ENCODE measurements at regions of chr9 and their contacts with region 1.

Region 1: DNA sequence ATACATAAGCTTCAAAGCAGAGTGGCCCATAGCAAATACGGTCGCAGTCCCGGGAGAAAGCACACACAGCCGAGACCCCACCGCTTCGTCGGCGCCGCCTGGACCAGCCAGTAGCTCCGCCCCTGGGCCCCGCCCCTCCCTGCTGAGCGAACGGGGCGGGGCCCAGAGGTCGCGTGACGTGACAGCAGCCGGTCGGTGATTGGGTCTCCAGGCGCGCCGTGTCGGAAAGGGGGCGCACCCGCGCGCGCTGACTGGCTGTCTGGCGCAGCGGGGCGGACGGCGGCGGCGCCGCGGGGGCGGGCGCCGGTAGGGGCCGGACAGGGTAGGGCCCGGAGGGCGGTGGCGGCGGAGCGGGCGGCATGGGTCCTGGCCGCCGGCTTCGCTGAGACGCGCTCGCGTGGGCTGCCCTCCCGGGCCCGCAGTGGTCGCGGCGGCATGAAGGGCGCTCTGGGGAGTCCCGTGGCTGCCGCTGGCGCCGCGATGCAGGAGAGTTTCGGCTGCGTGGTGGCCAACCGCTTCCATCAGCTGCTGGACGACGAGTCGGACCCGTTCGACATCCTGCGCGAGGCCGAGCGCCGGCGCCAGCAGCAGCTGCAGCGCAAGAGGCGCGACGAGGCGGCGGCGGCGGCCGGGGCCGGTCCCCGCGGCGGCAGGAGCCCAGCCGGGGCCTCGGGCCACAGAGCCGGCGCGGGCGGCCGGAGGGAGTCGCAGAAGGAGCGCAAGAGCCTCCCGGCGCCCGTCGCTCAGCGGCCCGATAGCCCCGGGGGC is at the start of gene HABP4:
- DNase-seq: peak; percentile 92 to 100 (median 96)

Region 2: DNA sequence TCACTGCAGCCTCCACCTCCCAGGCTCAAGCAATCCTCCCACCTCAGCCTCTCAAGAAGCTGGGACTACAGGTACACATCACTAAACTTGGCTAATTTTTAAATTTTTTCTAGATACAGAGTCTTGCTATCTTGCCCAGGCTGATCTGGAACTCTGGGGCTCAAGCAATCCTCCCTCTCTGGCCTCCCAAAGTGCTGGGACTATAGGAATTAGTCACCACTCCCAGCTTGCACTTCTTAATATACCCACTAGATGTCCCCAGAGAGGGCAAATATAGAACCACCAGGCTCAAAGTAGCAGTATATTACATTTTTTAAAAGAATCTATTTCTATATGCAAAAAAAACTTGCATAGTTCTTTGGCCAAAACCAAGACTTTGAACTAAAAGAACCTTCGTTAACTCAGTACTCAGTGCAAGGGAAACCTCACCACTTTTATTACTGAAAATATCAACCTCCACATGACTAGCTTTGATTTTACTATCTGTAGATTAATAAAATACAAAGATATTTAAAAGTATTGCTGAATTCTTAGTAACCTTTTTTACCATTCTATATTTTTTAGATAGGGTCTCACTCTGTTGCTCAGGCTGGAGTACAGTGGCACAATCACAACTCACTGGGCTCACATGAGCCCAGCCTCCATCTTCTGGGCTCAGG is 122.2 kb before region 1 on chr9:
- intact Hi-C with region 1: loop called (anchors 10 kb)
- DNase-seq: peak in 2 of 10 donors; percentile 25 to 45

Region 3: DNA sequence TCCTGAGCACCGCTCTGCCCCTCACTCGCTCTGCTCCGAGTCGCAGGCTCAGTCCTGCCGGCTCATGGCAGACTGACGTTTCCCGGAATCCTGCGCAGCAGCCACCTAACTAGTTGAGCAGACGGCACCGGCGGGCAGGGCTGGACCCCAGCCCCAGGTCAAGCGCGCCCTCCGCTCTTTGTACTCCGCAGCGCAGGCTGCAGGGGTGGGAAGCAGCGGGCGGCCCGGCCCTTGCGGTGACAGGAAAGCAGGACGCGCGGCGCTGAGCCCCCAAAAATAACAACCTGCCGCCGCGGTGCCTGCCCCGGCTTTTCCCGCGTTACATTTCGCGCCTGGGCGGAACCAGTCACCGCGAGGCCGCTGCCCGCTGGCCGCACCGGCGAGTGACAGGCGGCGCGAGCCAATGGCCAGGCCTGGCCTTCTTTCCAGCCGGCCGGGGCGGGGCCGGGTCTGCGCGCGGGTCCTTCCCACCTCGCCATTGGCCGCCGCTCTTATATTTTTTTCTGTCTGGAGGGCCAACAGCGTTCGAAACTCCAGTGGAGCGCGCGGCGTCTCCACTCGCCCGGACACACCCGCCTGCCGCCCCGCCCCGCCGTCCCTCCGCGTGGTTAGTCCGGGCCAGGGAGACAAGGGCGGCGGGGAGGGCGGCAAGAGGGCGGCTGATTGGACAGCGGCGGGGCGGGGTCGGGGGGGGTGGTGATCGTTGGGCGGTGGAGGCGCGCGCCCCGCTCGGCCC is 31.8 kb before region 1 on chr9 and contains the start of gene ZNF367:
- intact Hi-C with region 1: loop called (anchors 2 kb)
- DNase-seq: peak; percentile 91 to 99 (median 96)

Region 4: GRCh38 chr9:96532173-96532572 is 82.1 kb after region 1 on chr9:
- intact Hi-C with region 1: no loop called
- DNase-seq: no peak

Region 5: GRCh38 chr9:96566498-96567207 is 116.6 kb after region 1 on chr9:
- intact Hi-C with region 1: loop called (anchors 2 kb)
- DNase-seq: peak; percentile 63 to 97 (median 78)

Region 6: GRCh38 chr9:96604004-96604319 is 153.9 kb after region 1 on chr9:
- intact Hi-C with region 1: no loop called
- DNase-seq: no peak

Region 7: GRCh38 chr9:96619491-96620154 is 169.6 kb after region 1 on chr9 and contains the start of gene CDC14B:
- intact Hi-C with region 1: loop called (anchors 1 kb)
- DNase-seq: peak; percentile 80 to 98 (median 90)

Region 8: GRCh38 chr9:96654443-96655197 is 204.6 kb after region 1 on chr9:
- intact Hi-C with region 1: loop called (anchors 5 kb)
- DNase-seq: peak; percentile 49 to 95 (median 72)